ENCODE measurements at regions of chr3 and their contacts with region 1.

Region 1: DNA sequence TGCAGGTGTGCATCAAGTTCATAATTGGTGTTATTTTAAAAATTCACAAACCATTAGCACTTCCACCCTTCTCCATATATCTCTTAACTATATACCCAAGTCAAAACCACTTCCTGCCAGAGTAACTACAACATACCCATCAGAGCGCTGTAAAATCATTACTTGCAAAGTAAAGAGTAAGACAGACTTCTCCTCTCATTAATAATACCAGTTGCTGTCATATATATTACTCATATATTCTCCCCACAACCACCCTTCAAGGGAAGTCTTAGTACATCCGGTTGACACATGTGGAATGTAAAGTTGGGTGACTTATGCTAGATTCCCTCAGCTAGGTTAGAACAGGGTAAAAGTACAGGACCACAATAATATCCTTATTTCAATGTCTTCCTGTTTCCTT is 5.6 kb downstream of the TERC start:
- DNase-seq: no peak
- H3K4me3 Mint-ChIP-seq: no peak overlapping the region
- H3K27ac Mint-ChIP-seq: peak overlapping the region; percentile 40
- H3K4me1 Mint-ChIP-seq: peaks cover 37% of the 10 kb centered on the region
- H3K27me3 Mint-ChIP-seq: peaks cover 3% of the 10 kb centered on the region

Region 2: GRCh38 chr3:169662132-169662842 is 97.0 kb before region 1 on chr3:
- intact Hi-C with region 1: loop called (anchors 5 kb)
- DNase-seq: no peak
- H3K4me3 Mint-ChIP-seq: peak overlapping the region; percentile 75
- H3K27ac Mint-ChIP-seq: no peak overlapping the region
- H3K4me1 Mint-ChIP-seq: peaks cover 36% of the 10 kb centered on the region
- H3K27me3 Mint-ChIP-seq: peaks cover 86% of the 10 kb centered on the region

Region 3: DNA sequence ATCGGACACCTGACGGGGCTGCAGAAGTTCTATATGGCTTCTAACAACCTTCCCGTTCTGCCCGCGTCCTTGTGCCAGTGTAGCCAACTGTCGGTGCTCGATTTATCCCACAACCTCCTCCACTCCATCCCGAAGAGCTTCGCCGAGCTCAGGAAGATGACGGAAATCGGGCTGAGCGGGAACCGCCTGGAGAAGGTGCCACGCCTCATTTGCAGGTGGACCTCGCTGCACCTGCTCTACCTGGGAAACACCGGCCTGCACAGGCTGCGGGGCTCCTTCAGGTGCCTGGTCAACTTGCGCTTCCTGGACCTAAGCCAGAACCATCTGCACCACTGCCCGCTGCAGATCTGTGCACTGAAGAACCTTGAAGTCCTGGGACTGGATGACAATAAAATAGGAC is 63.3 kb after region 1 on chr3:
- intact Hi-C with region 1: no loop called
- DNase-seq: no peak
- H3K4me3 Mint-ChIP-seq: no peak overlapping the region
- H3K27ac Mint-ChIP-seq: no peak overlapping the region
- H3K4me1 Mint-ChIP-seq: no peaks in the 10 kb centered on the region
- H3K27me3 Mint-ChIP-seq: peaks cover 21% of the 10 kb centered on the region